GM12878 (cell line): ENCODE measurements at regions of chr12 and their contacts with region 1.

Region 1: GRCh38 chr12:39103552-39104165 is 198.3 kb upstream of the CPNE8 start:
- DNase-seq: peak; percentile 15
- ATAC-seq: peak; percentile 99
- H3K4me3 ChIP-seq: no peak overlapping the region
- H3K27ac ChIP-seq: no peak overlapping the region
- H3K4me1 ChIP-seq: no peaks in the 10 kb centered on the region
- H3K27me3 ChIP-seq: no peaks in the 10 kb centered on the region
- CTCF ChIP-seq: peak; percentile 66 to 77 (median 67)
- EP300 ChIP-seq: no peak
- POLR2A ChIP-seq: no peak
- RAD21 ChIP-seq: peak; percentile 94

Region 2: DNA sequence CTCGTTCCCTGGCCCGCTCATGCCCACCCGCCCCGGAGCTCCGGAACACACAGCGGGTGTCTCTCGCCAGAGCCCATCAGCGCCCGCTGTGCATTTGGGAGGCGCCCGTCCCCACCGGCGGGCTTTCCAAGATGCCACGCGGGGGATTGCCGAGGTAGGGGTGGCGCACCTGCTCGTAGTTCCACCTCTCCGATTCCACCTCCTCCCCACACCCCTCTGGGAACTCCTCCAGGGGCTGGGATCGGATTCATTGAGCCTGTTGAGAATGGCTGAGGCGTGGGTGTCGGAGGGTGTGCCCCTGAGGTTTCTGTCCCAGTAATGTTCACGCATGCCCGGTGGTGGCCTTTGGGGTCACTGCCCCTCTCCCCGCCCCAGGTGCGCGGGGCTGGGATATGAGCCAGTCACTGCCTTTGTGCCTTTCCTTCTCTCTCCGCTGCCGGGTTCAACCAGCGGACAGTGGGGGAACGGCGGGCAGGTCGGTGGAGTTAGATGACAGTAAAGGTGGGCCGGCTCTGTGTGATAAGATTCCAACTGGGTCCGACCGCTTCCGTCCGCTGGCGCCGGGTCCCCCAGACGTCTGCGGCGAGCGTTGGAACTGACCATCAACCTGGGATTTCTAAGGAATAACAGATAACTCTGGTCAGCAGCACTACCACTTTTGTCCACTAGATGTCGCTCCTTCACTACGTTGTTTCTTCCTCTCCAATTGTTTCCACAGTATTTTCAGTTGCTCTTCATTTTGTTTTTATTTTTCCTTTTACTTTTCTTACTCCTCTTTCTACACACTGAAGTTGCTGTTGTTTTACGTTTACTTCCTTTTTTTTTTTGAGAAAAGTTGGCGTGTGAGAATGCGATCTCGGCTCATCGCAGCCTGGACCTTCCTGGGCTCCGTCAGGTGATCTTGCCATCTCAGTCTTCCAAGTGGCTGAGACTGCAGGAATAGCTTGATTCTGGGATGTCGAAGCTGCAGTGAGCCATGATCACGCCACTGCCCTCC is 965.1 kb before region 1 on chr12:
- CTCF ChIA-PET with region 1: no interaction called
- POLR2A ChIA-PET with region 1: no interaction called
- RAD21 ChIA-PET with region 1: no interaction called
- SMC1A ChIA-PET with region 1: no interaction called
- in situ Hi-C with region 1: loop called (anchors 5 kb)
- intact Hi-C with region 1: loop called (anchors 5 kb)
- DNase-seq: peak; percentile 23
- ATAC-seq: peak; percentile 73
- H3K4me3 ChIP-seq: no peak overlapping the region
- H3K27ac ChIP-seq: no peak overlapping the region
- H3K4me1 ChIP-seq: no peaks in the 10 kb centered on the region
- H3K27me3 ChIP-seq: no peaks in the 10 kb centered on the region
- CTCF ChIP-seq: peak; percentile 82 to 94 (median 88)
- EP300 ChIP-seq: no peak
- POLR2A ChIP-seq: no peak
- RAD21 ChIP-seq: peak; percentile 81

Region 3: DNA sequence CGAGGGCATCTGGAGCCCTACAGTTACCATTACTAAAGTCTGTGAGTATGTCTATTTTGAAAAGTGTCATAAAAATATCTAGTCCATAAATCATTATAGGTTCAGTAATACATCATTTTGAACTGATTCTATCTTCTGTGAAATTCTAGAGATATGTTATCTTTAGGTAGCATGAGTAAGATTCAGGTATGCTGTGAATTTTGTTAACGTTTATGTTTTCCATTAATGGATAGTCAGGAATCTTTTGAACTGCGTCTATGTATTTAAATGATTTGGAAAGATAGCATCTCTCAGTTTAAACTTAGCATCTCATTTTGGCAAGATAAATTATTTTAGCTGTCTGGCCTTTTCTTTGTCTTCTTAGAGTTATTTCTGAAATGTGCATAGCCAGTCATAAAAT is 778.8 kb before region 1 on chr12:
- CTCF ChIA-PET with region 1: interaction called, 38 read pairs
- POLR2A ChIA-PET with region 1: no interaction called
- RAD21 ChIA-PET with region 1: interaction called, 13 read pairs
- SMC1A ChIA-PET with region 1: interaction called, 12 read pairs
- in situ Hi-C with region 1: loop called (anchors 5 kb)
- intact Hi-C with region 1: loop called (anchors 1 kb)
- DNase-seq: no peak
- ATAC-seq: no peak
- H3K4me3 ChIP-seq: no peak overlapping the region
- H3K27ac ChIP-seq: no peak overlapping the region
- H3K4me1 ChIP-seq: no peaks in the 10 kb centered on the region
- H3K27me3 ChIP-seq: no peaks in the 10 kb centered on the region
- CTCF ChIP-seq: no peak
- EP300 ChIP-seq: no peak
- POLR2A ChIP-seq: no peak
- RAD21 ChIP-seq: no peak

Region 4: DNA sequence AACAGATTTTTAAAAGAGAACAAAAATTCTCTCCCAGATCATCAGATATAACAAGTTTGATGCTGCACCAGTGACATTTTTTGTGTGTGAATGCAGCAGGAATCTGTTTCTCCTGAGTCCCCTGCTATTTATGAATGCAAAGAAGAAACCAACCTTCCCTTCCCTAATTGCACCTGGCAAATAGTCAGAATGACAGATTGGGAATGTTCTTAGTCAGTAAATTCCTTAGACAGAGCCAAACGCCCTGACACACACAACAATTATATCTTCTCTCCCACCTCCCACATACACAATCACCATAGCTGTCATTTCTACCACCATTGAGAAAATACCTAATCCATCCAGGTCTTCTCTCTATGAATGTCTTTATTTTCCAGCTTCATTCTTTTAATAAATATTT is 612.7 kb before region 1 on chr12:
- CTCF ChIA-PET with region 1: no interaction called
- POLR2A ChIA-PET with region 1: no interaction called
- RAD21 ChIA-PET with region 1: no interaction called
- SMC1A ChIA-PET with region 1: interaction called, 4 read pairs
- in situ Hi-C with region 1: no loop called
- intact Hi-C with region 1: loop called (anchors 10 kb)
- DNase-seq: no peak
- ATAC-seq: no peak
- H3K4me3 ChIP-seq: no peak overlapping the region
- H3K27ac ChIP-seq: no peak overlapping the region
- H3K4me1 ChIP-seq: no peaks in the 10 kb centered on the region
- H3K27me3 ChIP-seq: no peaks in the 10 kb centered on the region
- CTCF ChIP-seq: no peak
- EP300 ChIP-seq: no peak
- POLR2A ChIP-seq: no peak
- RAD21 ChIP-seq: no peak

Region 5: GRCh38 chr12:38915429-38916182 is 188.1 kb before region 1 on chr12:
- CTCF ChIA-PET with region 1: interaction called, 118 read pairs
- POLR2A ChIA-PET with region 1: no interaction called
- RAD21 ChIA-PET with region 1: interaction called, 44 read pairs
- SMC1A ChIA-PET with region 1: interaction called, 90 read pairs
- in situ Hi-C with region 1: loop called (anchors 5 kb)
- intact Hi-C with region 1: no loop called
- DNase-seq: no peak
- ATAC-seq: no peak
- H3K4me3 ChIP-seq: no peak overlapping the region
- H3K27ac ChIP-seq: no peak overlapping the region
- H3K4me1 ChIP-seq: no peaks in the 10 kb centered on the region
- H3K27me3 ChIP-seq: no peaks in the 10 kb centered on the region
- CTCF ChIP-seq: no peak
- EP300 ChIP-seq: no peak
- POLR2A ChIP-seq: no peak
- RAD21 ChIP-seq: no peak

Region 6: DNA sequence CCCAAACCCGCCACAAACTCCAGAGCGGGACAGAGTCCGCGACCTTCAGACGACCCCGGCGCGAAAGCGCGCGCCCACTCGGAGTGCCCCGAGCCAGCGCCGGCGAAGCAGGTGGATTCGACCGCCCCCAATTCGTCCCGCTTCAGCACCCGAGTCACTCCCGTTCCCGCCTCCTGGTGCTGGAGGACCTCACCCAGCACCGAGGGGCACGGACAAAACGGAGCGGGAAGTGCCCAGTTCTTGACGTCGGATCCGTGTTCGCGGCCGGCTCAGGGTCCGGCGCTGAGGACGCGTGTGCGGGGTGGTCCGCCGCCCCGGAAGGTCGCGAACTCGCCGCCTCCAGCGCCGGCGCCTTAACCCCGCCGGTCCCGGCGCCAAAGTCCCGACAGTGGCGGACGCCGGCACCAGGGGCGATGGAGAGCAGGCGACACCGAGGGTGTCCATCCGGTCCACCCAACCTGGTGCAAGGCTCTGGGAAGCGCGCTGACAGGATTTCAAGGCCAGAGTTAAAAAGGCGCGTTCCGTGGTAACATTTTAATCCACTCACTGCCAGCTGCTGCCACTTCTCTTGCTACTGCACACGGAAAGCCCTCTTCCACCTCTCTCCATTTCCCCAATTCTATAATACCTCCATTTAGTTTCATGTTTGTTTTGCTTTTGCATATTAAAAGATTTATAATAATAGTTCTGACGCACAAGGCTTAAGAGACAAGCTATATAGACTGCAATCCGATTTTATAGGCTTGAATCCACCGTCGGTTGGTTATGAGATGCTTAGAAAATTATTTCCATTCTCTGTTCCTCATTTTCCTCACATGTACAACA is 41.7 kb after region 1 on chr12:
- CTCF ChIA-PET with region 1: no interaction called
- POLR2A ChIA-PET with region 1: no interaction called
- RAD21 ChIA-PET with region 1: no interaction called
- SMC1A ChIA-PET with region 1: no interaction called
- in situ Hi-C with region 1: no loop called
- intact Hi-C with region 1: no loop called
- DNase-seq: no peak
- ATAC-seq: peak; percentile 96
- H3K4me3 ChIP-seq: no peak overlapping the region; the same call in 1 of the 2 replicates
- H3K27ac ChIP-seq: no peak overlapping the region
- H3K4me1 ChIP-seq: no peaks in the 10 kb centered on the region
- H3K27me3 ChIP-seq: no peaks in the 10 kb centered on the region
- CTCF ChIP-seq: peak in 2 of 3 experiments; percentile 35 to 52; a peak in 3 of 6 replicates
- EP300 ChIP-seq: no peak
- POLR2A ChIP-seq: no peak
- RAD21 ChIP-seq: no peak

Region 7: DNA sequence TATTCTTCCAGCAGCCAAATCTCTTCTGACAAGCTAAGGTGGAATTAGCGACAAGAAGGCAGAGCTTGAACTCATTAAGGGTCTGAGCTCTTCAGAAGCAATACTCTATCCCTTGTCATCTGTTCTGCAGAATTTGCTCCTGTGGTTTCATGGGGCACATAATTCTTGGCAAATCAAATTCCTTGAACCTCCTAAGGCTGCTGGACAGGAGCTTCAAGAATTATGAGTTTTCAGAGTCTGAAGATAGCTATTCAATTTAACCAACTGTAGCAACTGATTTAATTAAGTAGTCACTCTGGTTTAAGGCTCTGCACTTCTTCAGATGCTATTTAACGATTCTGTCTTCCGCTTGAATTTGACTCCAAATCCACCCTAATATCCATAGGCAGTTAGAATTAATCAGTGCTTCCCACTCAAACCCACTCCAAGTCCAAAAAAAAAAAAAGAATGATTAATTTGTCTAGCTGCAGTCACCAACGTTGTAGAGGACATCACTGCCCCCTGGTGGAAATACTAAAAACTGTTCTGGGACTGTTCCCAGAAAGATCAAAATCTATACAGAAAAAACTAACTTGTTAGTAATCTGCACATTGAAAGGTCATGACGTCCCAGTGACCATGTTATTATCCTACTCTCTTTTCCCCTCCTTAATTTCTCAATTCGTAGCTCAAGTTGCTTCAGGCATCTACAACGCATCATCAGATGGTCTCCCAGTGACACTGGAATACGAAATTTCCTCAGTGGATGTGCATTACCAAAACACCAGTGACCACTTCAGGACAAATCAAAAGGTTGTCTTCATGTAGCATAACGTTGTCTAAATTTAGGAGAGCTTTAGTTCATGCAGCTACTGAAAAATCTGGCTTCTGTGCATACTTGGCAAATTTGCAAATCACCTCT is 169.5 kb after region 1 on chr12:
- CTCF ChIA-PET with region 1: interaction called, 7 read pairs
- POLR2A ChIA-PET with region 1: no interaction called
- RAD21 ChIA-PET with region 1: interaction called, 3 read pairs
- SMC1A ChIA-PET with region 1: interaction called, 9 read pairs
- in situ Hi-C with region 1: no loop called
- intact Hi-C with region 1: loop called (anchors 5 kb)
- DNase-seq: no peak
- ATAC-seq: peak; percentile 61
- H3K4me3 ChIP-seq: no peak overlapping the region
- H3K27ac ChIP-seq: no peak overlapping the region
- H3K4me1 ChIP-seq: no peaks in the 10 kb centered on the region
- H3K27me3 ChIP-seq: no peaks in the 10 kb centered on the region
- CTCF ChIP-seq: peak; percentile 56 to 64 (median 59)
- EP300 ChIP-seq: no peak
- POLR2A ChIP-seq: no peak
- RAD21 ChIP-seq: peak; percentile 78